Activated CD4-positive, alpha-beta T cell treated with anti-CD3 and anti-CD28 coated beads for 36 hours (primary cell): ENCODE measurements at regions of chr14 and their contacts with region 1.

Region 1: DNA sequence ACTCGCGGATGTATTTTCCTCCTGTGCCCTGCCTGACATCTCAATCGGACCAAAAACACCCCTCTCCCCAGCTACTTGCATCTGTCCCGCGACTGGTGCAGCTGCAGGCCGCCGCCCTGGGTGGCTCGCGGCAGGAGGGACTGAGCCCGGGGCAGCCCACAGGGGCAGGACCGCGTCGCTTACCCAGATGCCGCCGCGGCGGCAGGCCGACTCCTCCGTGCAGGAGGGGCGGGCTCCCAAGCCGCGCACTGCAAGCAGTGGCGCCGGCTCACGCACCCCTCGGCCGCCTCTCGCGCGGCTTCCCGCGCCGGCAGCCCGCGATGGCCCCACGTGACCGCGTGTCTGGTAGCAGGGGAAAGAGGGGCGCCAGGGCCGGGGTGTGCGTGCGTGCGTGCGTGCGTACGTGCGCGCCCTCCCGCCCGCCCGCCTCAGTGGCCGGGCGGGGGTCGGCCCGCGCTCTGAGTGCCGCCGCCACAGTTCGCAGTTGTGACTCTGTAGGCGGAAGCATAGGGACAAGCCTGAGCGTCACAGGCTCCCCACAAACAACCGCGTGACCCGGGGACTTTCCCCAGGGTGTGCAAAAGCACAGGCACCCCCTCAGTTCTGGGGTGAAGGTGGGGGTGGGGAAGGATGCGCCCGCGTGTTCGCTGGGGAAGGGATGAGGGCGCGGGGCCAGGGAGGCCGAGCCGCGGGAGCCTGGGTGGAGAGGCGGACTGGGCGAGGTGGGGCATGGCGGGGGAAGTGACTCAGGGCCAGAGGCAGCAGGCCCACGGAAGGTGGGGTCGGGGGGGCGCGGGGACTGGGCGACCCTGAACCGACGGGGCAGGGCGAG is at the start of gene ZBTB25:
- DNase-seq: peak; percentile 97
- ATAC-seq: peak; percentile 66
- H3K4me3 Mint-ChIP-seq: peak within 1 kb of the TSS; percentile 98
- H3K27ac Mint-ChIP-seq: peak within 1 kb of the TSS; percentile 99
- H3K4me1 Mint-ChIP-seq: peaks cover 51% of the 10 kb centered on the region
- H3K27me3 Mint-ChIP-seq: no peaks in the 10 kb centered on the region
- total RNA-seq, gene ZBTB25: 32.7 to 40.0 TPM

Region 2: GRCh38 chr14:63641473-63642228 is 862.0 kb before region 1 on chr14 and contains the start of gene WDR89:
- CTCF ChIA-PET with region 1: no interaction called
- POLR2A ChIA-PET with region 1: no interaction called
- intact Hi-C with region 1: loop called (anchors 1 to 5 kb)
- DNase-seq: peak; percentile 98
- ATAC-seq: peak; percentile 87
- H3K4me3 Mint-ChIP-seq: peak within 1 kb of the TSS; percentile 79
- H3K27ac Mint-ChIP-seq: peak within 1 kb of the TSS; percentile 97
- H3K4me1 Mint-ChIP-seq: peaks cover 43% of the 10 kb centered on the region
- H3K27me3 Mint-ChIP-seq: no peaks in the 10 kb centered on the region
- total RNA-seq, gene WDR89: 13.9 to 27.2 TPM

Region 3: GRCh38 chr14:63867933-63868921 is 635.5 kb before region 1 on chr14:
- CTCF ChIA-PET with region 1: no interaction called
- POLR2A ChIA-PET with region 1: no interaction called
- intact Hi-C with region 1: loop called in 1 of 2 experiments (anchors 10 kb)
- DNase-seq: peak; percentile 26
- ATAC-seq: no peak
- H3K4me3 Mint-ChIP-seq: peak overlapping the region; percentile 1
- H3K27ac Mint-ChIP-seq: peak overlapping the region; percentile 70
- H3K4me1 Mint-ChIP-seq: peaks cover 62% of the 10 kb centered on the region
- H3K27me3 Mint-ChIP-seq: no peaks in the 10 kb centered on the region

Region 4: GRCh38 chr14:64465191-64465822 is 38.4 kb before region 1 on chr14 and contains the start of gene AKAP5:
- CTCF ChIA-PET with region 1: interaction called, 3 read pairs
- POLR2A ChIA-PET with region 1: interaction called, 3 read pairs
- intact Hi-C with region 1: loop called (anchors 2 to 5 kb)
- DNase-seq: peak; percentile 70
- ATAC-seq: peak; percentile 79
- H3K4me3 Mint-ChIP-seq: peak within 1 kb of the TSS; percentile 74
- H3K27ac Mint-ChIP-seq: peak within 1 kb of the TSS; percentile 67
- H3K4me1 Mint-ChIP-seq: peaks cover 42% of the 10 kb centered on the region
- H3K27me3 Mint-ChIP-seq: no peaks in the 10 kb centered on the region
- total RNA-seq, gene AKAP5: 0.39 to 0.43 TPM

Region 5: GRCh38 chr14:64566651-64567122 is 63.0 kb after region 1 on chr14:
- CTCF ChIA-PET with region 1: no interaction called
- POLR2A ChIA-PET with region 1: no interaction called
- intact Hi-C with region 1: no loop called
- DNase-seq: no peak
- ATAC-seq: no peak
- H3K4me3 Mint-ChIP-seq: no peak overlapping the region
- H3K27ac Mint-ChIP-seq: no peak overlapping the region
- H3K4me1 Mint-ChIP-seq: no peaks in the 10 kb centered on the region
- H3K27me3 Mint-ChIP-seq: no peaks in the 10 kb centered on the region

Region 6: GRCh38 chr14:64914237-64914971 is 410.7 kb after region 1 on chr14 and contains the start of gene CHURC1:
- CTCF ChIA-PET with region 1: interaction called, 4 read pairs
- POLR2A ChIA-PET with region 1: no interaction called
- intact Hi-C with region 1: loop called in 1 of 2 experiments (anchors 1 kb)
- DNase-seq: peak; percentile 98
- ATAC-seq: peak; percentile 96
- H3K4me3 Mint-ChIP-seq: peak within 1 kb of the TSS; percentile 89
- H3K27ac Mint-ChIP-seq: peak within 1 kb of the TSS; percentile 95
- H3K4me1 Mint-ChIP-seq: peaks cover 45% of the 10 kb centered on the region
- H3K27me3 Mint-ChIP-seq: no peaks in the 10 kb centered on the region
- total RNA-seq, gene CHURC1: 37.6 to 66.1 TPM

Region 7: GRCh38 chr14:65336191-65336591 is 832.5 kb after region 1 on chr14:
- CTCF ChIA-PET with region 1: no interaction called
- POLR2A ChIA-PET with region 1: no interaction called
- intact Hi-C with region 1: no loop called
- DNase-seq: peak; percentile 72
- ATAC-seq: peak; percentile 89
- H3K4me3 Mint-ChIP-seq: peak overlapping the region; percentile 74
- H3K27ac Mint-ChIP-seq: peak overlapping the region; percentile 95
- H3K4me1 Mint-ChIP-seq: peaks cover 55% of the 10 kb centered on the region
- H3K27me3 Mint-ChIP-seq: no peaks in the 10 kb centered on the region